ENCODE measurements at regions of chr1 and their contacts with region 1.

Region 1: GRCh38 chr1:36149237-36149972 is at the start of gene TRAPPC3:
- DNase-seq: peak; percentile 98

Region 2: GRCh38 chr1:36160949-36161485 is 11.6 kb after region 1 on chr1:
- CTCF ChIA-PET with region 1: interaction called, 10 read pairs
- POLR2A ChIA-PET with region 1: interaction called, 42 read pairs
- DNase-seq: no peak

Region 3: DNA sequence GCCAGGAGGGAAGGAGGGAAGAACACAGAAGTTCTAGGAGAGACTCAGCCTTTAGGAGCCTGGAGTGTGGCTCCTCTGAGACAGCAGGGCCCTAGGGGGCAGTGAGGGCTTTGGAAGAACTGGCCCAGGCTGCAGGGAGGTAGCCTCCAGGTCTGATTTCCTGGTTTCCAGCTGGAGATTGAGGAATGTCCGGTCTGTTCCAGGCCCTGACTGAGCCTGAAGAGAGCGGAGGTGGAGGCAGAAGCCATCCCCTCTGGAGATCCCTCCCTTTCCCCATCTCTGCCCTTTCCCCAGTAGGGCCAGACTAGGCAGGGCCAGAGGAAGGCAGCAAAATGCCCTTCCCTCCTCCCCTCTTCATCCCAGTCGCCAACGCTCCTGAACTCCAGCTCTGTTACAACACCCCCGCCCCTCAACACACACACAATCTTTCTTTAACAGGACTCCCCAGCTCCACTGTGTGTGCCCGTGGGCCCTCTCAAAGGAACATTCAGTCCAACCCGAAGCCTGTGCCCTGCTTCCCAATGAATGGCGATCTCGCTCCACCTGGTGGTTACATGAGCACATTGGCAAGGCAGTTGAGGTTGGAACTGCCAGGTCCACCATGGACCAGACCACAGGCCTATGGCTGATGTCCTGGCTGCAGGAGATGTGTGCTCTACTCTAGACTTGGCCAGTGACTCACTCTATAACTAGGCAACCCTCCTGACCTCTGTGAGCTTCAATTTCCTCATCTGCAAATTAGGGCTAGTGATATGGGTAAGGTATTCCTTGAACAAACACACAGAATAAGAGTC is 38.6 kb after region 1 on chr1:
- CTCF ChIA-PET with region 1: interaction called, 30 read pairs
- POLR2A ChIA-PET with region 1: interaction called, 14 read pairs
- DNase-seq: peak; percentile 85

Region 4: GRCh38 chr1:36223993-36224536 is 74.7 kb after region 1 on chr1 and contains the start of gene THRAP3:
- CTCF ChIA-PET with region 1: interaction called, 3 read pairs
- POLR2A ChIA-PET with region 1: interaction called, 16 read pairs
- DNase-seq: peak; percentile 96

Region 5: GRCh38 chr1:36285448-36286101 is 136.2 kb after region 1 on chr1:
- CTCF ChIA-PET with region 1: interaction called, 12 read pairs
- POLR2A ChIA-PET with region 1: interaction called, 3 read pairs
- DNase-seq: peak; percentile 69